OCI-LY7 (cell line): ENCODE measurements at regions of chr18 and their contacts with region 1.

Region 1: GRCh38 chr18:6629635-6630140 is 99.8 kb upstream of the ARHGAP28 start:
- DNase-seq: no peak
- H3K4me3 ChIP-seq: no peak overlapping the region
- H3K27ac ChIP-seq: no peak overlapping the region
- H3K4me1 ChIP-seq: no peaks in the 10 kb centered on the region
- CTCF ChIP-seq: no peak

Region 2: GRCh38 chr18:6495536-6495935 is 134.2 kb before region 1 on chr18:
- CTCF ChIA-PET with region 1: no interaction called
- POLR2A ChIA-PET with region 1: no interaction called
- intact Hi-C with region 1: no loop called
- DNase-seq: no peak
- H3K4me3 ChIP-seq: no peak overlapping the region
- H3K27ac ChIP-seq: no peak overlapping the region
- H3K4me1 ChIP-seq: no peaks in the 10 kb centered on the region
- CTCF ChIP-seq: no peak

Region 3: GRCh38 chr18:6614952-6615351 is 14.7 kb before region 1 on chr18:
- CTCF ChIA-PET with region 1: no interaction called
- POLR2A ChIA-PET with region 1: interaction called, 11 read pairs
- intact Hi-C with region 1: no loop called
- DNase-seq: no peak
- H3K4me3 ChIP-seq: no peak overlapping the region
- H3K27ac ChIP-seq: no peak overlapping the region
- H3K4me1 ChIP-seq: no peaks in the 10 kb centered on the region
- CTCF ChIP-seq: no peak